Naive thymus-derived CD4-positive, alpha-beta T cell (primary cell): ENCODE measurements at regions of chr3 and their contacts with region 1.

Region 1: DNA sequence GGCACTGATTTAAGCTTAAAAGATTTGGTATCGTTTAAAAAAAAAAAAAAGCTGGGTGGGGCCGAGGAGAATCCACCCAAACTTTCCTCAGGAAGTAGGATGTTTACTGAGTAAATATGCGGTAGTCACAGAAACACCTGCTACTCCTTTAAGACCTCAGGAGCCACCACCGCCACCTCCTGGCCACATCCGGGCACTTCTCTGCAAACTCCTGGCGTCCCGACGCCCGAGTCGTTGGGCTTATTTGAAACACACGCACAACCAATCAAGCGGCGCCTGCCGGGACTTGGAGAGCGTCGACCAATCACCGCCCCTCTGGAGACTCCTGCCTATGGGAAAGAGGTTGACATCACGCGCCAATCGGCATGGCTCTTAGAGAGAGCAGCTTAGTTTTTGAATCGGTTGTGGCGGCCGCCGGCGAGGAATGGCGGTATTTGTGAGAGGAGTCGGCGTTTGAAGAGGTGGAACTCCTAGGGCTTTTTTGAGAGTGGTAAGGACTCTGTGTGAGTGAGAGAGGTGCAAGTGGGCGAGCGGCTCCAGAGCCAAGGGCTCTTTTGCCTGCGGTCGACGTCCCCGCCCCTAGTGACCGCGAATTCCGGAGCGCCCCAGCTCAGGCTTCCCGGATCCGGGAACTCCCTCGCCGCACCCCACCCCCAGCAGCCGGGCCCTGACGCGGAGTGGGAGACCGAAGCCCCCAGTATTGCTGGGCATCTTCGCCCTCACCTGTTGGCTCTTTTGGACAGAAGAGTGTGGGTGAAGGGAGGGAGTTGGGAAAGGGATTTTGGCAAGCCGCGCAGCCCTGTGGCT is at the start of gene ECT2:
- DNase-seq: peak; percentile 87 to 98 (median 94)
- ATAC-seq: peak; percentile 98
- H3K4me3 ChIP-seq: peak within 1 kb of the TSS; percentile 88
- H3K4me3 Mint-ChIP-seq: peak within 1 kb of the TSS; percentile 88 to 100 (median 96)
- H3K27ac ChIP-seq: peak within 1 kb of the TSS; percentile 63
- H3K27ac Mint-ChIP-seq: peak within 1 kb of the TSS; percentile 52 to 98 (median 85)
- H3K4me1 ChIP-seq: peaks cover 5% of the 10 kb centered on the region in 2 donors
- H3K4me1 Mint-ChIP-seq: peaks cover 6 to 45% (median 15%) of the 10 kb centered on the region in 7 donors
- H3K27me3 ChIP-seq: no peaks in the 10 kb centered on the region
- H3K27me3 Mint-ChIP-seq: peaks cover 0 to 8% (median 0%) of the 10 kb centered on the region in 5 donors
- total RNA-seq, gene ECT2: 1.3 to 41.2 (median 2.1) TPM

Region 2: DNA sequence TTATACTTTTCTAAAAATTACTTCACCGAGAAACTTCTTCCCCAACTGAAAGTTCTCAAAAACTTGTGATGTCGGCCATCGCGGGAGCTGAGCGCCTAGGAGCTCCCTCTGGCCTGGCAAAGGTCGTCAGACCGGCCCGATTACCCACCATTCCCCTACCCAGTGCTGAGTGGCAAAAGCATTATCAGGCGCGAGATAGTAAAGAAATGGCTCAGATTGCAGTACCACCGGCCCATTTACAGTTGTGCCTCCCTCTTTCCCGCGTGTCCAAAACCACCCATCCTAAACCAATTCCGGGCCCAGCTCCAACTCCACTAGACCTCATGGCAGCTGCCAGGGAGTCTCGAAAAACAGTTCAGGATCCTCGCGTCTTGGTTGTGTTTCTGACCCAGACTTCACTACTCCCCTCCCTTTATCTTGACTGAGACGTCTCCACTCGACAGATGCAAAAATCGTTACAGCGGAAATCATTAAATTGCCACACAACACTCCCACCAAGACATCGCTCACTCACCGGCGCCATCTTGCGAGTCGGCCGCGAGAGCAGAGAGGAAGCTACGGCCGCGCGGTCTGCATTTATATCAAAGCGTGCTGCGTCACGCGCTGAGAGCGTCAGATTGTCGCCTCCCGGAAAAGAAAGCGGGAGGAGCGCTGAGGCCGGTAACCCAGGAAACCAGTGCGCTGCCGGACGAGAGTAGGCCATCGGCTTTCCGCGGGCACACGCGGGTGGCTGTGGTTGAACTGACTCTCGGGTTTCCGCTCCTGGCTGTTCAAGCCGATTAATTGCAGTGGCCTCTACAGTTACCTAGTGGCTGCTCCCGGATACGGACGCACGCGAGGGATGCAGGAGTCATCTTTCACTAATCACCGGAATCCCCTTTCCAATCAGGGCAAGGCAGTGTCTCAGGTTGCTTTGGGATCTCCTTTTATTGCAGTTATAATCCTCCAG is 1880.7 kb before region 1 on chr3 and contains the start of gene RPL22L1:
- CTCF ChIA-PET with region 1: no interaction called
- POLR2A ChIA-PET with region 1: no interaction called
- intact Hi-C with region 1: loop called in 1 of 2 experiments (anchors 1 kb)
- DNase-seq: peak; percentile 83 to 92 (median 90)
- ATAC-seq: peak; percentile 96
- H3K4me3 ChIP-seq: peak within 1 kb of the TSS; percentile 84
- H3K4me3 Mint-ChIP-seq: peak within 1 kb of the TSS; percentile 93 to 98 (median 94)
- H3K27ac ChIP-seq: peak within 1 kb of the TSS; percentile 86
- H3K27ac Mint-ChIP-seq: peak within 1 kb of the TSS; percentile 96 to 99 (median 98)
- H3K4me1 ChIP-seq: peaks cover 22% of the 10 kb centered on the region in 2 donors
- H3K4me1 Mint-ChIP-seq: peaks cover 10 to 41% (median 26%) of the 10 kb centered on the region in 7 donors
- H3K27me3 ChIP-seq: no peaks in the 10 kb centered on the region
- H3K27me3 Mint-ChIP-seq: peaks cover 0 to 4% (median 0%) of the 10 kb centered on the region in 5 donors
- total RNA-seq, gene RPL22L1: 27.5 to 62.6 (median 47.9) TPM

Region 3: DNA sequence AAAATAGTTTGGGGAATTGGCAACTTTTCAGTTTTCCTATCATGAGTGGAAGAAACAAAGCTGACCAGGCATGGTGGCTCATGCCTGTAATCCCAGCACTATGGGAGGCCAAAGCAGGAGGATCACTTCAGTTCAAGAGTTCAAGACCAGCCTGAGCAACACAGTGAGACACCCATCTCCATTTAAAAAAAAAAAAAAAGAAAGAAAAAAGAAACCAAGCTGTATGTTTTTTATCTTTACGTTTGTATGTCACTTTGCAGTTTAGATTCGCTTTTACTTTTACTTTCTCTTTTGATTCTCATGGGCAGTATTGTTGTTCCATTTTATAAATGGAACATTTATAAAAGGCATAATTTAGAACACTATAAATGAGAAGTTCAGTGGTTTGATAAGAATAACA is 1259.2 kb before region 1 on chr3:
- CTCF ChIA-PET with region 1: no interaction called
- POLR2A ChIA-PET with region 1: no interaction called
- intact Hi-C with region 1: loop called in 1 of 2 experiments (anchors 5 kb)
- DNase-seq: peak in 6 of 9 donors; percentile 14 to 57 (median 36)
- ATAC-seq: peak; percentile 26
- H3K4me3 ChIP-seq: peak overlapping the region; percentile 10
- H3K4me3 Mint-ChIP-seq: peak overlapping the region; percentile 36 to 82 (median 74)
- H3K27ac ChIP-seq: no peak overlapping the region
- H3K27ac Mint-ChIP-seq: peak overlapping the region; percentile 79 to 90 (median 85)
- H3K4me1 ChIP-seq: peaks cover 32 to 38% of the 10 kb centered on the region in 2 donors
- H3K4me1 Mint-ChIP-seq: peaks cover 15 to 55% (median 48%) of the 10 kb centered on the region in 7 donors
- H3K27me3 ChIP-seq: no peaks in the 10 kb centered on the region
- H3K27me3 Mint-ChIP-seq: no peaks in the 10 kb centered on the region

Region 4: GRCh38 chr3:172522871-172523818 is 227.4 kb before region 1 on chr3 and contains the start of gene TNFSF10:
- CTCF ChIA-PET with region 1: no interaction called
- POLR2A ChIA-PET with region 1: interaction called, 4 read pairs
- intact Hi-C with region 1: loop called (anchors 1 to 5 kb)
- DNase-seq: peak; percentile 19 to 71 (median 60)
- ATAC-seq: peak; percentile 87
- H3K4me3 ChIP-seq: peak within 1 kb of the TSS; percentile 86
- H3K4me3 Mint-ChIP-seq: peak within 1 kb of the TSS; percentile 89 to 100 (median 96)
- H3K27ac ChIP-seq: peak within 1 kb of the TSS; percentile 85
- H3K27ac Mint-ChIP-seq: peak within 1 kb of the TSS; percentile 88 to 100 (median 99)
- H3K4me1 ChIP-seq: peaks cover 26 to 34% of the 10 kb centered on the region in 2 donors
- H3K4me1 Mint-ChIP-seq: peaks cover 36 to 63% (median 53%) of the 10 kb centered on the region in 7 donors
- H3K27me3 ChIP-seq: no peaks in the 10 kb centered on the region
- H3K27me3 Mint-ChIP-seq: no peaks in the 10 kb centered on the region
- total RNA-seq, gene TNFSF10: 10.8 to 234 (median 45.0) TPM

Region 5: GRCh38 chr3:172710664-172711453 is 39.7 kb before region 1 on chr3 and contains the start of gene NCEH1:
- CTCF ChIA-PET with region 1: no interaction called
- POLR2A ChIA-PET with region 1: no interaction called
- intact Hi-C with region 1: loop called (anchors 1 kb)
- DNase-seq: peak; percentile 35 to 68 (median 58)
- ATAC-seq: peak; percentile 99
- H3K4me3 ChIP-seq: peak within 1 kb of the TSS; percentile 90
- H3K4me3 Mint-ChIP-seq: peak within 1 kb of the TSS; percentile 93 to 98 (median 97)
- H3K27ac ChIP-seq: peak within 1 kb of the TSS; percentile 45
- H3K27ac Mint-ChIP-seq: peak within 1 kb of the TSS; percentile 53 to 95 (median 82)
- H3K4me1 ChIP-seq: peaks cover 5 to 13% of the 10 kb centered on the region in 2 donors
- H3K4me1 Mint-ChIP-seq: peaks cover 12 to 26% (median 21%) of the 10 kb centered on the region in 7 donors
- H3K27me3 ChIP-seq: no peaks in the 10 kb centered on the region
- H3K27me3 Mint-ChIP-seq: peaks cover 0 to 17% (median 0%) of the 10 kb centered on the region in 5 donors
- total RNA-seq, gene NCEH1: 3.2 to 8.9 (median 4.8) TPM